ENCODE measurements at regions of chr5 and their contacts with region 1.

Region 1: DNA sequence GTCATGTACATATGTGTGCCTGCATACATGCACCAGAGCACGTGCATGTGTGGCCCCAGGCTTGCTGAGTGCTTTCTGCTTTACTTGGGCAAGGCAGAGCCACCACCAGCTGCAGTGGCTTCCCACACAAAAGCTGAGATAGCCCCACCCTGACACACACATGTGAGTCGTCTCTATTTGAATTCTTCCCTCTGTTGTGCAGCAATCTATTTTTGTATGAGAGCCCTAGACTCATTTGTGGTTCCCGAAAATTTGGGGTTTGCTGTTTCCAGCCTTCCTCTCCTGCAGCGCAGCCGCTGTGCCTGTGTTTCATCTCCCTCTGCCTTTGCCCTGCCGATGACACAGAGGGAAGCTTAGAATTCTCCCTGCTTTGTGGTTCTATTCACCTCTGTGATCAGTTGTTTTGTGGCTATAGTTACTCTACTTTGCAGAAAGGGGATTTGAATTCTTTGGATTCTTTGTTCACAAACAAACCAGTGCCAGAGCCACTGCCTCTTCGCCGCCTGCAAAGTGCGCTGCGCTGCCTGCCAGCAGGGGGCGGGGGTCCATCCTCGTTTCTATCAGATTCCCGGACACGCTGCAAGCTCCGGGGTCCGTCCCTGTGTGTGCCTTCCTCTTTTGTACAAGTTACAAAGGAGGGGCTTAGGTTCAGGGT is 95.8 kb upstream of the DAP start:
- DNase-seq: peak in 1 of 3 donors; percentile 39
- ATAC-seq: peak in 3 of 4 donors; percentile 35 to 64 (median 53)
- H3K4me3 ChIP-seq: no peak overlapping the region
- H3K27ac ChIP-seq: no peak overlapping the region
- H3K4me1 ChIP-seq: no peaks in the 10 kb centered on the region
- H3K27me3 ChIP-seq: no peaks in the 10 kb centered on the region
- CTCF ChIP-seq: peak; percentile 41 to 72 (median 61)
- POLR2A ChIP-seq: no peak

Region 2: GRCh38 chr5:10695055-10695649 is 161.7 kb before region 1 on chr5:
- intact Hi-C with region 1: loop called in 1 of 2 experiments (anchors 10 kb)
- DNase-seq: peak; percentile 76 to 82 (median 76)
- ATAC-seq: peak; percentile 92 to 97 (median 94)
- H3K4me3 ChIP-seq: no peak overlapping the region
- H3K27ac ChIP-seq: no peak overlapping the region
- H3K4me1 ChIP-seq: no peaks in the 10 kb centered on the region
- H3K27me3 ChIP-seq: no peaks in the 10 kb centered on the region
- CTCF ChIP-seq: peak; percentile 63 to 91 (median 87)
- POLR2A ChIP-seq: no peak

Measured in right lobe of liver (tissue), 6 donors.